ENCODE measurements at regions of chr6 and their contacts with region 1.

Region 1: GRCh38 chr6:28355743-28356665 is 6.3 kb downstream of the ZKSCAN3 start:
- DNase-seq: peak; percentile 45
- H3K4me3 ChIP-seq: peak overlapping the region; percentile 49
- H3K27me3 ChIP-seq: no peaks in the 10 kb centered on the region
- CTCF ChIP-seq: peak; percentile 68

Region 2: DNA sequence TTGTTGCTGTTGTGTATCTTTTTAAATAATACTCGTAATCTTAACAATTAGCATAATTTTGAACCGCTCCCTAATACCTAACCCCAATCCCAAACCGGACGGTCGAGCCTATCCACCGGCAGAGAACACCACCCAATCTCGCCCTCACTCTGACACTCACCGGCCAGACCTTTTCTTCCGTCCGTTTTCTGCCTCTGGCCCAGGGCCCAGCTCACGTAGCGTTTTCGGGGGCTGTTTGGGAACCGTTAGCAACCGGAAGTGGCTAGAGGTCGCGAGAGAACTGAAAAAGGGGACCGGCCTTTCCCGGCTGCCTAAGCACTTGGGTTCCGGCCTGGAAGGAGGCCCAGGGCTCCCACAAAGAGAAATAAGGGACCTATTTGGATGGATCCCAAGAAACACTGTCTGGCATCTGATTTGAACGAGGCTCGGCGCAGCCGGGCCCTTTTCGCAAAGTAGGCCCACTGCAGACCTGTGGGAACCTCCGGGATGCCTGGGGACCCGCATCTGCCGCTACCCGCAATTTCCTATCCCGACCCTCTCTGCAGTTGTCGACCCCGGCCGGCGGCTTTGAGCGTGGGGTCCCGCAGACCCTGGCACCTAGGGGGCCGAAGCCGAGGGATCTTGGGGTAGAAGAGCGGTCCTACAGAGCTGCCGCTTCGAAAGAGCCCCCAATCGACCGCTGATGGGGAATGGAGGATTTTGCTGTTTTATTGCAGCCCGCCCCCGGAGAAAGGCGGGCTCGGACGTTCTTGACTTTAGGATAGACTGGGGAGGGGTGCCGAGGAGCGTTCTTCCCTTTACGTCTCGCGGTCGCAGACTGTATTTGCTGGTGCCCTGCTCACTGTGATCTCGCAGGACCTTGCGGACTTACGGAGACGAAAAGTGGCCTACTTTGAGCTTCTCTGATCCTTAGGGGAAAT is 219.2 kb before region 1 on chr6:
- CTCF ChIA-PET with region 1: interaction called, 14 read pairs
- POLR2A ChIA-PET with region 1: no interaction called
- DNase-seq: no peak
- H3K4me3 ChIP-seq: peak overlapping the region; percentile 76
- H3K27me3 ChIP-seq: no peaks in the 10 kb centered on the region
- CTCF ChIP-seq: no peak

Region 3: DNA sequence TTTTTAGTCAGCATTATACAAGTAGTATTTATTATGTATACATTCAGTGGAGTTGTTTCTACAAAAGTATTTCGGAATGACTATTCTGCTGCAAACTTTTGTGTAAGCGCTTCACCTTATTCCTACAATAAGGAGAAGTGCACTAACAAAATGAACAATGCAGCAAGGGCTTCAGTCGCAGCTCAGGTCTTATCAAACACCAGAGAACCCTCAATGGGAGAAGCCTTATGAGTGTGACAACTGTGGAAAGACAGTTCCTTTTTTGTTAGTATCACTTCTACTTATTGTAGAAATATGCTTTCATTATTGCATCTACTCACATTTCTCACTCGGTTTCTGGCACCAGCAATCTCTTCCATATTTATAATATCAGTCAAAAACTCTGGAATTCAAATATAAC is 12.5 kb after region 1 on chr6:
- CTCF ChIA-PET with region 1: interaction called, 14 read pairs
- POLR2A ChIA-PET with region 1: interaction called, 5 read pairs
- DNase-seq: no peak
- H3K4me3 ChIP-seq: no peak overlapping the region
- H3K27me3 ChIP-seq: no peaks in the 10 kb centered on the region
- CTCF ChIP-seq: no peak

Region 4: DNA sequence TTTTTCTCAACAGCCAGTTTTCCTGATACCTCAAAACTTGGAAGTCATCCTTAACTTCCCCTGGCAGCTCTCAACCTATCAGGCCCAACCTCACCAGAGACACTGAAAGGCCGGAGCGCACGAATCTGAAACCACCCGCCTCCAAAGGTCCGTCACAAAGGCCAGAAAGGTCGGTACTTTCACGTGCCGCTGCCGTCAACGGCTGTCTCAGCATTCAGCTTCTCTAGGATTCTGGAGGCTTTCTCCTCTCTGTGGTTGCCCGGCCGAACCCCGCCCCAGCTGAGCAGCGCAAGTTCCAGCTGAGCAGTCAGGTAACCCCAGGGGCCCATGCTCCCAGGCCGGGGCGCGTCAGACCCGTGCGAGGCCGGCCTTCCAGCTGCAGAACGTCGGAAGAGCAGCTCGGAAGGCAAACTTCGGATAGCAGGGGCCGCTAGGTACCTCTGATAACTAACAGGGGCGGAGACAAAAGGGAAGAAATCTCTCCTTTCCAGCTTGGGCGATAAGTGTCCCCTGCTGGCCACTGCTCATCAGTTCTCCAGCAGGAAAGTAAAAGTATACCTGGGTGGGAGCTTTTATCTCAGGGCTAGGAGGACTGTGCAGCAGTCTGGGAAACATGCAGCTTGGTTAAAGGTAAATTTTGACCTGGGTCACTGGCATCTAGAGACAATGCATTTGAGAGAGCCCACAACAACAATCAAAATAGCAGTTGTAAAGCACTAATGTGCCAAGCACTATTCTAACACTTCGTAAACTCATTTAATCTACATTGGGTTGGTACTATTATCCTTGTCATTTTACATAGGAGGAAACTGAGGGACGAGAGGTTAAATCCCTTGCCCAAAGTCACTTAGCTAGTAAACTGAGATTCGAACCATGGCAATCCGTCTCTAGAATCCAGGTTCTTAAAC is 27.5 kb after region 1 on chr6:
- CTCF ChIA-PET with region 1: interaction called, 14 read pairs
- POLR2A ChIA-PET with region 1: no interaction called
- DNase-seq: peak; percentile 34
- H3K4me3 ChIP-seq: peak overlapping the region; percentile 43
- H3K27me3 ChIP-seq: no peaks in the 10 kb centered on the region
- CTCF ChIP-seq: peak; percentile 59

Measured in BJ (cell line).